ENCODE measurements at regions of chr10 and their contacts with region 1.

Region 1: DNA sequence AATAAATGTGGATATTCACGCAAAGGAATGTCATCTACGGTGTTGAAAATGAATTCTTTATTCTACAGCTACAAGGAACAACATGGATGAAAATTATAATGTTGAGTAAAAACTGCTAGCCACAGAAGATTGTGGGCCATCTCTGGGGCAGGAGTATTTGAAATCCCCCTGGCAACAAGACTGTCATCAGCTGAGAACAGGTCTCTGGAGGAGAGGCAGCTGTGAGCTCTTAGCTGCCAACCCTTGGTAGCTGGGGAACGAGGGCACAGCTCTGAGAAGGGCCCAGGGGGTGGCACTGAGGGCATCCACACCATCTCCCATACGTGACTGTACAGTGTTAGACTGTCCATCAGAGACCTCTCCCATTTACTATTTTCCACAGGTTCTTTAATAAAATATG is 340.1 kb upstream of the MGMT start:
- DNase-seq: no peak
- H3K4me3 ChIP-seq: no peak overlapping the region
- CTCF ChIP-seq: no peak
- POLR2A ChIP-seq: no peak

Region 2: DNA sequence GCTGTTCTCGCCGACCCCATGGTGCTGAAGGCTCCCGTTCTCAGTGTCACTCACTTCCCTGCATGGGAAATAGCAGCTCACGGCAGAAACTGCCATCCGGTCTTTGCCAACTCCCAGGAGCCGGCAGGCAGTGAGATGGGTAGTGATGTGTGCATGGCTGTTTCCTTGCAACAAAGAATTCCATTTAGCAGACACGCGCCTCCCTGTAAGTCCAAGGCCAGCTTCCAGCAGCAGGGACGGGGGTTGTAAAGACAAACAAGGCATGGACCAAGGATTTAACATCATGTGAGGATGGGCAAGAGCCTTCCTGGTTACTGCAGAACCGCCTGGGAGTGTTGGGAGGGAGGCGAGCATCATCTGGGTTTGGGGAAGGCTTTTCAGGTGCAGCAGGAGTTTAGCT is 1282.3 kb after region 1 on chr10:
- intact Hi-C with region 1: loop called (anchors 5 kb)
- DNase-seq: peak in 1 of 2 donors; percentile 62
- H3K4me3 ChIP-seq: no peak overlapping the region
- CTCF ChIP-seq: no peak
- POLR2A ChIP-seq: no peak

Measured in lower leg skin (tissue), 4 donors.